Breast epithelium (tissue), 4 donors: ENCODE measurements at regions of chr5 and their contacts with region 1.

Region 1: GRCh38 chr5:88119535-88120125 is 149.0 kb downstream of the TMEM161B start:
- DNase-seq: no peak
- H3K4me3 ChIP-seq: no peak overlapping the region
- H3K27ac ChIP-seq: no peak overlapping the region
- H3K4me1 ChIP-seq: no peaks in the 10 kb centered on the region
- H3K27me3 ChIP-seq: no peaks in the 10 kb centered on the region
- CTCF ChIP-seq: no peak
- POLR2A ChIP-seq: no peak

Region 2: GRCh38 chr5:88060194-88060593 is 59.4 kb before region 1 on chr5:
- intact Hi-C with region 1: loop called (anchors 5 kb)
- DNase-seq: no peak
- H3K4me3 ChIP-seq: no peak overlapping the region
- H3K27ac ChIP-seq: no peak overlapping the region
- H3K4me1 ChIP-seq: no peaks in the 10 kb centered on the region
- H3K27me3 ChIP-seq: no peaks in the 10 kb centered on the region
- CTCF ChIP-seq: no peak
- POLR2A ChIP-seq: no peak